GM10248 (cell line): ENCODE measurements at regions of chr5 and their contacts with region 1.

Region 1: GRCh38 chr5:35436410-35437057 is 181.1 kb upstream of the SPEF2 start:
- DNase-seq: peak; percentile 13
- CTCF ChIP-seq: peak; percentile 32

Region 2: DNA sequence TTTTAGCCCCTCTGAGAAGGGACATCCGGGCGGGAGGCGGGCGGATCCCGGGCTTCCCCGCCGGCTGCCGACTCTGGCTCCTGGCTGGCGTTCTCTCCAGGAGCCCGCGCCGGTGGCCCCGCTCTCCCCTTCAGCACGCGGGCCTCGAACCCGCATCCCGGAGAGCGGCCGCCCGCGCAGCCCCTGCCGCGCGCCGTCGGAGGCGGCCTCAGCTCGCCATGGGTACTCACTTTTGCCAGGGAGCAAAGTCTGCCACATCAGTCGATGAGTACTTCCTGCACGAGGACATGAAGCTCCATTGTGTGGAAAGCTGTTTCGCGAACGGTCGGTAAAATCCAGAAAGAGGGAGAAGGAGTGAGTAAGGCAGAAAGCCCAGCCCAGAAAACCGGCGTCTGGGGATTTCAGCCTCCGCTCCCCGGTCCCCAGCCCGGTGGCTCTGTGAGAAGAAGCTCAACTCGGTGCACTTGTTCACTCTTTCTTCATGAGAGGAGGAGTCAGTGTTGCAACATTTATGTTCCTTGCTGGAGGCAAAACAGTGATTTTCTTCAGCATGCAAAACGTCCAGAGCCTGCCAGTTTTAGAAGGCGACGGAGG is 206.4 kb before region 1 on chr5 and contains the start of gene PRLR:
- CTCF ChIA-PET with region 1: interaction called, 15 read pairs
- POLR2A ChIA-PET with region 1: no interaction called
- DNase-seq: peak; percentile 17
- CTCF ChIP-seq: no peak

Region 3: GRCh38 chr5:35416217-35416988 is 20.1 kb before region 1 on chr5:
- CTCF ChIA-PET with region 1: interaction called, 11 read pairs
- POLR2A ChIA-PET with region 1: no interaction called
- DNase-seq: no peak
- CTCF ChIP-seq: no peak

Region 4: GRCh38 chr5:35617435-35618303 is 181.1 kb after region 1 on chr5 and contains the start of gene SPEF2:
- CTCF ChIA-PET with region 1: no interaction called
- POLR2A ChIA-PET with region 1: no interaction called
- DNase-seq: peak; percentile 48
- CTCF ChIP-seq: peak; percentile 61